Uterus (tissue), 4 donors: ENCODE measurements at regions of chr13 and their contacts with region 1.

Region 1: GRCh38 chr13:94549232-94550061 is 46.5 kb downstream of the TGDS start:
- DNase-seq: peak; percentile 92 to 95
- H3K4me3 ChIP-seq: peak overlapping the region; percentile 55 to 68
- H3K27ac ChIP-seq: peak overlapping the region; percentile 92 to 100
- H3K4me1 ChIP-seq: no peaks in the 10 kb centered on the region
- H3K27me3 ChIP-seq: no peaks in the 10 kb centered on the region
- CTCF ChIP-seq: peak in 1 of 4 experiments; percentile 26
- POLR2A ChIP-seq: peak; percentile 8 to 39

Region 2: DNA sequence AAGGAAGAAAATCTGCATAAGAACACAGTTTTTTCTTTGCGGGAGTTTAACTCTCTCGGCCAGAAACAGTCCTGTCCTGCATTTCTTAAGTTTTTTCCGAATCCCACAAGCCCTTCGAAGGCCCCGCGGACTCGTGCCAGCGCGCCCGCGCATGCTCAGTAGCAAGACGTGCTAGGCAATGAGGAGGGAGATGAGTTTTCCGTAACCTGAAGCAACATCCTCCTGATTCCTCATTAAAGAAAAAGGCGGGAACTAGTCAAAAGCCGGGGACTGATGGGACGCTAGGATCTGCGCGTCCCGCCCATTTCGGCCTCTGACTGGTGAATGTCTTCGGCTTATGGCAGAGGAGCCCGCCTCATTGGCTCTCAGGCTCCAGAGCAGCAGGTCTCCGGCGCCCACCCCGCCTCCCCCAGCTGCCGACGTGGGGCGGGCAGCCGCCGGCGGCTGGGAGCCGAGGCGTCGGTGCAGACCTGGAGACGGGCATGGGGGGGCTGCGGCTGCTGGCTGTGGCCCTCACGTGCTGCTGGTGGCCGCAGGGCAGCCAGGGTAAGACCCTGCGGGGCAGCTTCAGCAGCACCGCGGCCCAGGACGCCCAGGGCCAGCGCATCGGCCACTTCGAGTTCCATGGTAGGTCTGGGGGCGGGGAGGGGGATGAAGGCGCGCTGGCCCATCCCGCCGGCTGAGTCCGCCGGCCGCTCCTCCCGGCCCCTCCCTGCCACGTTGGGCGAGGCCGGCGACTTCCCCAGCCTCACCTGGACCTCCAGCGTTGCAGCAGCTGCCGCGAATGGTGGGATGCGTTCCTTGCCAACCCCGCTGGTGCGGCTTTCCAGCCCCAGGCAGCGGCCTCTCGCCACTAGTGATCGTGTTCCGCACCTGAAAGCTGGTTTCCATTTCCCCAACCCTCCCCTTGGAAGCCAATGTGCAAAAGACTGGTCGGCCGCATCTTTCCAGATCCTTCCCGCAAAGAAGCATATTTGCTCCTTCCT is 52.3 kb after region 1 on chr13 and contains the start of gene GPR180:
- intact Hi-C with region 1: loop called (anchors 10 kb)
- DNase-seq: peak; percentile 95 to 98
- H3K4me3 ChIP-seq: peak within 1 kb of the TSS; percentile 66 to 88
- H3K27ac ChIP-seq: peak within 1 kb of the TSS; percentile 81 to 87
- H3K4me1 ChIP-seq: no peaks in the 10 kb centered on the region
- H3K27me3 ChIP-seq: no peaks in the 10 kb centered on the region
- CTCF ChIP-seq: no peak
- POLR2A ChIP-seq: peak; percentile 40 to 84
- total RNA-seq, gene GPR180: 3.6 to 24.9 (median 7.7) TPM